ENCODE measurements at regions of chr5 and their contacts with region 1.

Region 1: GRCh38 chr5:164013077-164013670 is 507.8 kb downstream of the MAT2B start:
- DNase-seq: peak; percentile 75
- H3K4me3 Mint-ChIP-seq: no peak overlapping the region
- H3K27ac Mint-ChIP-seq: no peak overlapping the region
- H3K4me1 Mint-ChIP-seq: peaks cover 12% of the 10 kb centered on the region
- H3K27me3 Mint-ChIP-seq: no peaks in the 10 kb centered on the region
- CTCF ChIP-seq: peak; percentile 77

Region 2: GRCh38 chr5:164256351-164256750 is 243.2 kb after region 1 on chr5:
- CTCF ChIA-PET with region 1: no interaction called
- intact Hi-C with region 1: loop called (anchors 1 kb)
- DNase-seq: no peak
- H3K4me3 Mint-ChIP-seq: no peak overlapping the region
- H3K27ac Mint-ChIP-seq: no peak overlapping the region
- H3K4me1 Mint-ChIP-seq: peaks cover 12% of the 10 kb centered on the region
- H3K27me3 Mint-ChIP-seq: no peaks in the 10 kb centered on the region
- CTCF ChIP-seq: no peak

Region 3: DNA sequence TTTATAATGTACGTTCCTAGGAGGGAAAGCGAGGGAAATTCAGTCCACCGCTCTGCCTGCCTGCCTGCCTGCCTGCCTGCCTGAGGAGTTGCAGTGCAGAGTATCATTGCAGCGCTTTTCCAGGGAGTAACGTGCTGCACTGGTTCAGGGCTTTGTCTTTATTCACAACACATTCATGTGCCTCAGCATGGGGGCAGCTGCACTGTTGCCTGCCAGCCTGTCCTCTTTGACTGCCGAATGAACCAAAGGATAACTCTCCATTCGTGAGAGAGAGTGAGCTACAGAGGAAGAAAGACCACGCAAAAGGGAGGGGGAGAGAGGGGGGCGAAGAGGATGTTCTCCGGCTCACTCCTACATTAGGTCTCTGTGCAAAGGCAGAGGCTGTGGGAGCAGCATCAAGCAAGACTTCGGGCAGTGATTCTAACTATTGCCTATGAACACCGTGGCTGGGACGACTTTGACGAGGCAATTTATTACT is 283.5 kb after region 1 on chr5:
- CTCF ChIA-PET with region 1: no interaction called
- intact Hi-C with region 1: no loop called
- DNase-seq: no peak
- H3K4me3 Mint-ChIP-seq: no peak overlapping the region
- H3K27ac Mint-ChIP-seq: no peak overlapping the region
- H3K4me1 Mint-ChIP-seq: no peaks in the 10 kb centered on the region
- H3K27me3 Mint-ChIP-seq: no peaks in the 10 kb centered on the region
- CTCF ChIP-seq: no peak

Region 4: GRCh38 chr5:164475339-164475977 is 462.3 kb after region 1 on chr5:
- CTCF ChIA-PET with region 1: interaction called, 3 read pairs
- intact Hi-C with region 1: loop called (anchors 1 kb)
- DNase-seq: peak; percentile 34
- H3K4me3 Mint-ChIP-seq: no peak overlapping the region
- H3K27ac Mint-ChIP-seq: no peak overlapping the region
- H3K4me1 Mint-ChIP-seq: no peaks in the 10 kb centered on the region
- H3K27me3 Mint-ChIP-seq: no peaks in the 10 kb centered on the region
- CTCF ChIP-seq: peak; percentile 58

Region 5: GRCh38 chr5:164504141-164504772 is 491.1 kb after region 1 on chr5:
- CTCF ChIA-PET with region 1: interaction called, 11 read pairs
- intact Hi-C with region 1: loop called (anchors 1 kb)
- DNase-seq: peak; percentile 68
- H3K4me3 Mint-ChIP-seq: peak overlapping the region; percentile 3
- H3K27ac Mint-ChIP-seq: no peak overlapping the region
- H3K4me1 Mint-ChIP-seq: peaks cover 9% of the 10 kb centered on the region
- H3K27me3 Mint-ChIP-seq: no peaks in the 10 kb centered on the region
- CTCF ChIP-seq: peak; percentile 77

Region 6: GRCh38 chr5:164672931-164673694 is 659.9 kb after region 1 on chr5:
- CTCF ChIA-PET with region 1: interaction called, 3 read pairs
- intact Hi-C with region 1: loop called (anchors 10 kb)
- DNase-seq: no peak
- H3K4me3 Mint-ChIP-seq: no peak overlapping the region
- H3K27ac Mint-ChIP-seq: no peak overlapping the region
- H3K4me1 Mint-ChIP-seq: no peaks in the 10 kb centered on the region
- H3K27me3 Mint-ChIP-seq: no peaks in the 10 kb centered on the region
- CTCF ChIP-seq: no peak

Region 7: DNA sequence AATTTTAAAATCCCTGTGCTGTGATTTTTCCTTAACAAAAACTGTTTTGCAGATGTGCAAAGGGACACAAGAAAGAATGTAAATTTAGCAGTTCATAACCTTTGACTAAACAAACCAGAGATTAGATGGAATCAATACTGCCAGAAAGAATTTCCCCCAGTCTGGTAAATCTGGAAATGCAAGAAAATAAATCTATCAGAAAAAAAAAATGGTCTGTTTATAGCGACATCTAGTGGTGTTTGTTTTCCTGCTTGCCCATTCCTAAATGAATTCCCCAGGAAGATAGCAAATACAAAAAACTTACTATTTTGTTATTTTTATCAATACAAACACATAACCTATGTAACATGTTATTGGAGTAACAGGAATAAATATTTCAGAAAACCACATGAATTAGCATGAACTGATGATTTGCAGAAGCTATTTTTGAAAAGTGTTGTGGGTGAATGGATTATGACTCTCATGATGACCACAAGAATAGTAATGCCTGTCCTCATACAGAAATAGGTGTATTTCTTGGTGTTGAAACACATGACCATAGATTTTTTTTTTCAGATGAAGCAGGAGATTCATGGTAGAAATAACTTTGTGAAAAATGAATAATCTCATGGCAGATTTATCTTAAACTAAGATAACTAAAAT is 1196.0 kb after region 1 on chr5:
- CTCF ChIA-PET with region 1: no interaction called
- intact Hi-C with region 1: loop called (anchors 1 kb)
- DNase-seq: peak; percentile 6
- H3K4me3 Mint-ChIP-seq: no peak overlapping the region
- H3K27ac Mint-ChIP-seq: no peak overlapping the region
- H3K4me1 Mint-ChIP-seq: peaks cover 8% of the 10 kb centered on the region
- H3K27me3 Mint-ChIP-seq: no peaks in the 10 kb centered on the region
- CTCF ChIP-seq: peak; percentile 56